ENCODE measurements at regions of chr7 and their contacts with region 1.

Region 1: DNA sequence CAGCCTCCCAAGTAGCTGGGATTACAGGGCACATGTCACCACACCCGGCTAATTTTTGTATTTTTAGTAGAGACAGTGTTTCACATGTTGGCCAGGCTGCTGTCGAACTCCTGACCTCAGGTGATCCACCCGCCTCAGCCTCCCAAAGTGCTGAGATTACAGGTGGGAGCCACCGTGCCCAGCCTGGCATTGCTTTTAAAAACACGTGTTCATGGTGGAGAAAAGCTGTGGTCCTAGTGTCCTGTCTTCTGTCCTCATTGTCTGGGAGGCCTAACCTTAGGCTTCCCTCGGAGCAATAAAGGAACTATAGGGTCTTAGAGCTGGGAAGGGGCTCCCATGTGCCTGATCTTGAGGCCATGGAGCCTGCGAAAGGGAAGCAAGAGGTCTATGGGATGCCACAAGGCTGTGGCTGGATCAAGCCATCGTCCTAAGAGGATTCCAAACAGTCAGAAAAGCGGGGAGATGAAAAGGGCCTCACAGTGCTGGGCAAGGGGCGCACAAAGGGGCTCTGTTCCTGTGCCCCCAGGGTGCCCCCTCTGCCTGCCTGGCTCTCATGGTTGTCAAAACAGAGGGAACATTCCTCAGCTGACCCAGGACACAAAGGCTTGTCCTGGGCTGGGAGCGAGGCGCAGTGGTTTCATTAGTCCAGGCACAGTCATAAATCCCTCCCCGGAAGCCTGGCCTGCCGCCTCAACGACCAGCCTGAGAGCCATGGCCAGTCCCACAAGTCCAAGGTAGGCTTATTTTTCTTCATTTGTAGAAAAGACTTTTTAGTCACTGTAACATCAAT is 106.6 kb upstream of the TNS3 start:
- DNase-seq: no peak

Region 2: GRCh38 chr7:47893247-47893646 is 204.7 kb after region 1 on chr7:
- CTCF ChIA-PET with region 1: interaction called, 10 read pairs
- POLR2A ChIA-PET with region 1: no interaction called
- DNase-seq: peak; percentile 69